ENCODE measurements at regions of chr7 and their contacts with region 1.

Region 1: DNA sequence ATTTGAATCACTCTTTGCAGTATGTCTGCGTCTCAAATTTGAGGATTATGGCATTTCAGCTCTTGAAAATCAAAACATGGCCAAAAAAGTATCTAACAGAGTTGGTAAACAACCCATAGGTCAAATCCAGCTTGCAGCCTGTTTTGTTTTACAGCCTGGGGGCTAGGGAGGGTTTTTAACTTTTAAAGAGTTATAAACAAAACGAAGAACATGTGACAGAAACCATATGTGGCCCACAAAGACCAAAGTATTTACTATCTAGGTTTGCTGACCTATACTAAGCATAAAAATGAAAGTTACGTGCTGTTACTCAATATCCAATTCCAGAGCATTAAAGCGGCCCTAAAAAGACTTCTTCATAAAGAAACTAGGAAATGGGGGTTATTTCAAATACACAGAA is 55.5 kb upstream of the STARD3NL start:
- DNase-seq: no peak
- ATAC-seq: no peak

Region 2: GRCh38 chr7:38160003-38160571 is 37.6 kb after region 1 on chr7:
- intact Hi-C with region 1: loop called (anchors 5 kb)
- DNase-seq: no peak
- ATAC-seq: no peak